Endothelial cell of umbilical vein (primary cell): ENCODE measurements at regions of chr3 and their contacts with region 1.

Region 1: GRCh38 chr3:67113802-67114407 is 115.8 kb downstream of the KBTBD8 start:
- DNase-seq: peak; percentile 87
- H3K4me3 ChIP-seq: no peak overlapping the region
- H3K27ac ChIP-seq: no peak overlapping the region
- H3K4me1 ChIP-seq: no peaks in the 10 kb centered on the region
- H3K27me3 ChIP-seq: no peaks in the 10 kb centered on the region
- CTCF ChIP-seq: peak; percentile 93 to 96
- POLR2A ChIP-seq: no peak

Region 2: DNA sequence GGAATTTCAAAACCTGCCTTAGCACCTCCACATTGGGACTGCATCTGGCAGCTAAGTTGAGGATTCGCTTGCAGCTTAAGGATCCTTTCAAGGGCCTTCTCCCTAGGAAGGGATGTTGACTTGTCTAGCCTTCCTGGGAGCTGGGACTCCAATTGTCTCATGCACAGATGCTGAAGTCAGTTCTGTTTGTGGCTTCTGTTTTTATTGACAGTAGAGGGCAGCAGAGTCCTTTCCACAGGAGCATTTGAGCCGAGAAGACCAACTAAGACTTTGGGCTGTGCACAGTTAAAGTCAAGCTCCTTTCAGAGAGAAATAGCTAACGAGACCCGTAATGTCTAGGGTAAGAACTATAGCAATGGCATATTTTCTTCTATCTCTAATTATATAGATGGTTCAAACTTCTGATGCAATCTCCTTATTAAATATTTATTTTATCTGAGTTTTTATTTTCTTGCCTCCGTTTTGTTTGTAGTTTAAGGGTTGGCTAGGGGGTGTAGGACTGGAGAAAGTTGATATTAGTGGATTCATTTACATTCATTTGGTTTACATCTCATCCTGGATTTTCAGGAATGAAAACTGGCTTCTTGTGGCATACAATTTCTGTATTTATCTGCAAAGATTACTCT is 175.5 kb before region 1 on chr3:
- CTCF ChIA-PET with region 1: interaction called, 20 read pairs
- POLR2A ChIA-PET with region 1: no interaction called
- dilution Hi-C with region 1: no loop called
- intact Hi-C with region 1: no loop called
- DNase-seq: peak; percentile 61
- H3K4me3 ChIP-seq: no peak overlapping the region
- H3K27ac ChIP-seq: no peak overlapping the region
- H3K4me1 ChIP-seq: no peaks in the 10 kb centered on the region
- H3K27me3 ChIP-seq: peaks cover 0 to 2% of the 10 kb centered on the region in 2 experiments
- CTCF ChIP-seq: peak; percentile 58 to 66
- POLR2A ChIP-seq: no peak

Region 3: GRCh38 chr3:67090474-67090873 is 23.4 kb before region 1 on chr3:
- CTCF ChIA-PET with region 1: interaction called, 16 read pairs
- POLR2A ChIA-PET with region 1: no interaction called
- dilution Hi-C with region 1: no loop called
- intact Hi-C with region 1: no loop called
- DNase-seq: peak; percentile 84
- H3K4me3 ChIP-seq: no peak overlapping the region
- H3K27ac ChIP-seq: peak overlapping the region; percentile 46
- H3K4me1 ChIP-seq: peaks cover 8% of the 10 kb centered on the region
- H3K27me3 ChIP-seq: no peaks in the 10 kb centered on the region
- CTCF ChIP-seq: no peak
- POLR2A ChIP-seq: no peak

Region 4: GRCh38 chr3:67176396-67176795 is 62.5 kb after region 1 on chr3:
- CTCF ChIA-PET with region 1: no interaction called
- POLR2A ChIA-PET with region 1: no interaction called
- dilution Hi-C with region 1: no loop called
- intact Hi-C with region 1: no loop called
- DNase-seq: no peak
- H3K4me3 ChIP-seq: no peak overlapping the region
- H3K27ac ChIP-seq: no peak overlapping the region
- H3K4me1 ChIP-seq: no peaks in the 10 kb centered on the region
- H3K27me3 ChIP-seq: no peaks in the 10 kb centered on the region
- CTCF ChIP-seq: no peak
- POLR2A ChIP-seq: no peak

Region 5: GRCh38 chr3:67384760-67385397 is 271.0 kb after region 1 on chr3:
- CTCF ChIA-PET with region 1: interaction called, 20 read pairs
- POLR2A ChIA-PET with region 1: no interaction called
- dilution Hi-C with region 1: no loop called
- intact Hi-C with region 1: loop called (anchors 10 kb)
- DNase-seq: peak; percentile 45
- H3K4me3 ChIP-seq: no peak overlapping the region
- H3K27ac ChIP-seq: no peak overlapping the region
- H3K4me1 ChIP-seq: no peaks in the 10 kb centered on the region
- H3K27me3 ChIP-seq: no peaks in the 10 kb centered on the region
- CTCF ChIP-seq: peak; percentile 71 to 75
- POLR2A ChIP-seq: no peak

Region 6: GRCh38 chr3:68866157-68866556 is 1752.3 kb after region 1 on chr3:
- CTCF ChIA-PET with region 1: interaction called, 13 read pairs
- POLR2A ChIA-PET with region 1: no interaction called
- dilution Hi-C with region 1: no loop called
- intact Hi-C with region 1: no loop called
- DNase-seq: no peak
- H3K4me3 ChIP-seq: no peak overlapping the region
- H3K27ac ChIP-seq: no peak overlapping the region
- H3K4me1 ChIP-seq: no peaks in the 10 kb centered on the region
- H3K27me3 ChIP-seq: peaks cover 0 to 3% of the 10 kb centered on the region in 2 experiments
- CTCF ChIP-seq: no peak
- POLR2A ChIP-seq: no peak

Region 7: DNA sequence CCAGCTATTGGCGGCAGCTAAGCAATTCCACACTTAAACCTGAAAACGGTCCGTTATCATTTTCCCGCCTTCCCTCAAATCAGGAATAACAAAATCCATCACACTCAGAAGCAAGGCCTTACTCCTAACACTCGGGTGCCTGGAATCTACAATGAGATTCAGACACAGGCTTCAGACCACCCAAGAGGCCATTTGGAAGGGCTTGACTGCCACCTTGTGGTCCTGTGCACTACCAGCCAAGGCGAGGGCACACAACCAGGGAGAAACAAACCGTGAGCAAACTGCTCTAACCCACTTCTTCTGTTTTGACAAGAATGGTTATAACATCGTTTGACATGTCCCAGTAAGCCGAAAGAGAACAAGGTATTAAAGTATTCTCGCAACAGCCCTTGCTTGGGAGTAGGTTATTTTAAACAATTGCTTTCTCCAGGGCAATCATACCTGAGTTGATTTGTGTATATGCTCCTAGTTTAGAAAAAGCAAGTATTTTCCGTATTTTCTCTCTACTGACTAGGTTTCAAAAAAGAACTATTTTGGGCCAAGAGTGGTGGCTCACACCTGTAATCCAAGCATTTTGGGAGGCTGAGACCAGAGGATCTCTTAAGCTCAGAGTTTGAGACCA is 1858.6 kb after region 1 on chr3:
- CTCF ChIA-PET with region 1: interaction called, 36 read pairs
- POLR2A ChIA-PET with region 1: no interaction called
- dilution Hi-C with region 1: no loop called
- intact Hi-C with region 1: loop called (anchors 1 kb)
- DNase-seq: peak; percentile 65
- H3K4me3 ChIP-seq: no peak overlapping the region
- H3K27ac ChIP-seq: no peak overlapping the region
- H3K4me1 ChIP-seq: peaks cover 12% of the 10 kb centered on the region
- H3K27me3 ChIP-seq: peaks cover 10 to 21% of the 10 kb centered on the region in 2 experiments
- CTCF ChIP-seq: peak; percentile 89 to 90
- POLR2A ChIP-seq: no peak